Aorta (tissue), 5 donors: ENCODE measurements at regions of chr17 and their contacts with region 1.

Region 1: GRCh38 chr17:50638851-50639767 is 4.4 kb downstream of the ABCC3 start:
- DNase-seq: peak; percentile 98
- ATAC-seq: peak; percentile 85
- H3K4me3 ChIP-seq: no peak overlapping the region
- H3K27ac ChIP-seq: peak overlapping the region; percentile 1 to 91
- H3K4me1 ChIP-seq: peaks cover 0 to 5% of the 10 kb centered on the region in 2 donors
- H3K27me3 ChIP-seq: no peaks in the 10 kb centered on the region

Region 2: GRCh38 chr17:50661795-50662391 is 22.8 kb after region 1 on chr17:
- intact Hi-C with region 1: loop called (anchors 2 to 5 kb)
- DNase-seq: peak; percentile 84 to 85
- ATAC-seq: peak; percentile 61
- H3K4me3 ChIP-seq: no peak overlapping the region
- H3K27ac ChIP-seq: no peak overlapping the region
- H3K4me1 ChIP-seq: no peaks in the 10 kb centered on the region
- H3K27me3 ChIP-seq: no peaks in the 10 kb centered on the region

Region 3: GRCh38 chr17:50686494-50687199 is 47.5 kb after region 1 on chr17:
- intact Hi-C with region 1: loop called (anchors 2 to 5 kb)
- DNase-seq: peak; percentile 89 to 92
- ATAC-seq: peak; percentile 88
- H3K4me3 ChIP-seq: no peak overlapping the region
- H3K27ac ChIP-seq: peak overlapping the region; percentile 71 to 94
- H3K4me1 ChIP-seq: no peaks in the 10 kb centered on the region
- H3K27me3 ChIP-seq: no peaks in the 10 kb centered on the region